Ascending aorta (tissue), 2 donors: ENCODE measurements at regions of chr9 and their contacts with region 1.

Region 1: GRCh38 chr9:112750111-112750767 is at the start of gene SNX30:
- DNase-seq: peak; percentile 70 to 95
- H3K4me3 ChIP-seq: peak within 1 kb of the TSS; percentile 84 to 98
- H3K27ac ChIP-seq: peak within 1 kb of the TSS; percentile 92 to 93
- H3K4me1 ChIP-seq: peaks cover 14 to 38% of the 10 kb centered on the region in 2 donors
- H3K27me3 ChIP-seq: no peaks in the 10 kb centered on the region
- CTCF ChIP-seq: no peak
- total RNA-seq, gene SNX30: 4.7 TPM

Region 2: GRCh38 chr9:112333639-112334431 is 416.4 kb before region 1 on chr9:
- intact Hi-C with region 1: loop called (anchors 2 kb)
- DNase-seq: peak; percentile 65 to 97
- H3K4me3 ChIP-seq: peak overlapping the region; percentile 83 to 95
- H3K27ac ChIP-seq: peak overlapping the region; percentile 98 to 100
- H3K4me1 ChIP-seq: peaks cover 0 to 7% of the 10 kb centered on the region in 2 donors
- H3K27me3 ChIP-seq: no peaks in the 10 kb centered on the region
- CTCF ChIP-seq: peak; percentile 31 to 77 (median 63)

Region 3: GRCh38 chr9:112379177-112380101 is 370.8 kb before region 1 on chr9:
- intact Hi-C with region 1: loop called (anchors 2 kb)
- DNase-seq: peak; percentile 97 to 100
- H3K4me3 ChIP-seq: peak overlapping the region; percentile 89 to 94
- H3K27ac ChIP-seq: peak overlapping the region; percentile 92 to 98
- H3K4me1 ChIP-seq: peaks cover 0 to 30% of the 10 kb centered on the region in 2 donors
- H3K27me3 ChIP-seq: no peaks in the 10 kb centered on the region
- CTCF ChIP-seq: no peak

Region 4: GRCh38 chr9:112486221-112487007 is 263.8 kb before region 1 on chr9 and contains the start of gene KIAA1958:
- intact Hi-C with region 1: loop called (anchors 5 kb)
- DNase-seq: peak; percentile 33 to 89
- H3K4me3 ChIP-seq: peak within 1 kb of the TSS; percentile 96 to 99
- H3K27ac ChIP-seq: peak within 1 kb of the TSS; percentile 80 to 89
- H3K4me1 ChIP-seq: peaks cover 3 to 10% of the 10 kb centered on the region in 2 donors
- H3K27me3 ChIP-seq: no peaks in the 10 kb centered on the region
- CTCF ChIP-seq: no peak
- total RNA-seq, gene KIAA1958: 2.0 TPM

Region 5: DNA sequence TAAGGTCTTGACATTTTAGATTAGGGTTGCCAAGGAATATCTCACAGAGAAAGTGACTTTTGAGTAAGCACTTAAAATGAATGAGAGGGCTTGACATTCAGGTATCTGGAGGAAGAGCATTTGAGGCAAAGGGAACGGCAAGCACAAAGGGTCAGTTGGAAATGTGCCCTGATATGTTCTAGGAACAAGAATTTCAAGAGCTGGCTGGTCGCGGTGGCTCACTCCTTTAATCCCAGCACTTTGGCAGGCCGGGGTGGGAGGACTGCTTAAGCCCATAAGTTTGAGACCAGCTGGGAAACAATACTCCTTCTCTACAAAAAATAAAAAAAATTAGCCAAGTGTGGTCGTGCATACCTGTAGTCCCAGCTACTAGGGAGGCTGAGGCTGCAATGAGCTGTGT is 247.1 kb before region 1 on chr9:
- intact Hi-C with region 1: no loop called
- DNase-seq: no peak
- H3K4me3 ChIP-seq: no peak overlapping the region
- H3K27ac ChIP-seq: no peak overlapping the region
- H3K4me1 ChIP-seq: no peaks in the 10 kb centered on the region
- H3K27me3 ChIP-seq: no peaks in the 10 kb centered on the region
- CTCF ChIP-seq: no peak

Region 6: DNA sequence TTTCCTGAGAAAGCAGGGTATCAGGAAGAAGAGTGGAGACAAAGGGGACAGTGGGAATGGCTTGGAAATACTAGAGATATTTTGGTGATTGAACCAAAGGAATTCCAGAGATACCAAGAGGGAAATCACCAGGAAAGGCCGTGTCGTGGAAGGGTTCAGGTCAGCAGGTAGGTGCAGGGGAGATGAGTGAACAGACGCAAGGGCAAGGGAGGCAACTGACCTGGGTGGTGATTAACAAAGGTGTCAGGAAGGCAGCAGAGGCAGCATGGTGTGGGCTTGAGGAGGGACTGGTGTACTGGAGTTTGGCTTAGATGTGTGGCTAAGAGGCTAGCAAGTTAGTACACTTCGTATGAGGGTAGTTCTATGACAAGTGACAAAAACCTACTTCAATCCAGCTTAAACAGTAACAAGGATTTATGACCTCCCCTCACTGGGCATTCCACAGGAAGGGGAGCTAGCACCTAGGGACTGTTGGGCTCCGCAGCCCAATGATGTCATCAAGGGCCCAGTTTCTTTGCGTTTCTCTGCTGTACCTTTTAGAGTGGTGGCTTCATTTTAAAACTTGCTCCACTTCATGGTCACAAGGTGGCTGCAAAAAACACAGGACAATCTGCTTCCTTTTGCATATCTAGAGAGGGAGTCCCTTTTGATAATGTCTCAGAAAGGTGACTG is 69.4 kb before region 1 on chr9:
- intact Hi-C with region 1: no loop called
- DNase-seq: no peak
- H3K4me3 ChIP-seq: no peak overlapping the region
- H3K27ac ChIP-seq: no peak overlapping the region
- H3K4me1 ChIP-seq: no peaks in the 10 kb centered on the region
- H3K27me3 ChIP-seq: no peaks in the 10 kb centered on the region
- CTCF ChIP-seq: no peak

Region 7: DNA sequence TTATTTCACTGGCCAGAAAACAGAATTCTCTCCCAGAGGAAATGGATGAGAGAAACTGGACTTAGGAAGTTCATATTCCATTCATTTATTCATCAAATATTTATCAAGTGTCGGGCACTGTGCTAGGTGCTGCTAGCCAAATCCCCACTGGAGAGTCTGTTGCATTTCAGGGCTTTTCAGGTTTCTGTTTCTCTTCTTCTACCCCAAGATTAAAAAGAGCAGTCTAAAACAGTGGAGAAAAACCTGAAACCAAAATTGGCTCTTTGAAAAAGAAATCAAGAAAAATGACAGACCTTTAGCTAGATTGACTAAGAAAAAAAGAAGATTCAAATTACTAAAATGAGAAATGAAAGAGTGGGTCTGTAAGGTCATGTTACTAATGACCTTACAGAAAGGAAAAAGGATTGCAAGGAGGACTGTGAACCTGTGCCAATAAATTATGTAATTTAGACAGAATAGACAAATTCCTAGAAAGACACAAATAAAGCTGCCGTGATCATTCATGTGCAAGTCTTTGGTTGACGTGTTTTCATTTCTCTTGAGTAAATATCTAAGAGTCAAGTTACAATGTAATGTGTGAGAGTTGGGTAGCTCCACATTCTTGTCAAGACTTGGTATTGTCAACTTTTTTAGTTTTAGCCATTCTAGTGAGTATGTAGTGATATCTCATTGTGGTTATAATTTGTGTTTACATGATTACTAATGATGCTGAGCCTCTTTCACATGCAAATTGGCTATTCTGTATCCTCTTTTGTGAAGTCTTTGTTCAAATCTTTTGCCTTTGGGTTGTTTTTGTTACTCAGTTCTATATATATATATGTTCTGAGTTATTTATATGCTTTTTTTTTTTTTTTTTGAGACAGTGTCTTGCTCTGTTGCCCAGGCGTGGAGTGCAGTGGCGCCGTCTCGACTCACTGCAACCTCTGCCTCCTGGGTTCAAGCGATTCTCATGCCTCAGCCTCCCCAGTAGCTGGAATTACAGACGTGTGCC is 24.1 kb after region 1 on chr9:
- intact Hi-C with region 1: no loop called
- DNase-seq: no peak
- H3K4me3 ChIP-seq: no peak overlapping the region
- H3K27ac ChIP-seq: no peak overlapping the region
- H3K4me1 ChIP-seq: no peaks in the 10 kb centered on the region
- H3K27me3 ChIP-seq: no peaks in the 10 kb centered on the region
- CTCF ChIP-seq: no peak

Region 8: GRCh38 chr9:112793213-112793810 is 43.1 kb after region 1 on chr9:
- intact Hi-C with region 1: loop called (anchors 5 kb)
- DNase-seq: peak in 1 of 2 donors; percentile 72
- H3K4me3 ChIP-seq: no peak overlapping the region
- H3K27ac ChIP-seq: no peak overlapping the region
- H3K4me1 ChIP-seq: peaks cover 9 to 17% of the 10 kb centered on the region in 2 donors
- H3K27me3 ChIP-seq: no peaks in the 10 kb centered on the region
- CTCF ChIP-seq: peak; percentile 40 to 55 (median 44)

Region 9: GRCh38 chr9:112819635-112820496 is 69.6 kb after region 1 on chr9:
- intact Hi-C with region 1: loop called (anchors 2 kb)
- DNase-seq: peak in 1 of 2 donors; percentile 82
- H3K4me3 ChIP-seq: no peak overlapping the region
- H3K27ac ChIP-seq: peak overlapping the region in 1 of 2 donors; percentile 19
- H3K4me1 ChIP-seq: peaks cover 0 to 8% of the 10 kb centered on the region in 2 donors
- H3K27me3 ChIP-seq: no peaks in the 10 kb centered on the region
- CTCF ChIP-seq: peak; percentile 50 to 72 (median 53)

Region 10: GRCh38 chr9:112867416-112867991 is 117.3 kb after region 1 on chr9:
- intact Hi-C with region 1: no loop called
- DNase-seq: no peak
- H3K4me3 ChIP-seq: no peak overlapping the region
- H3K27ac ChIP-seq: no peak overlapping the region
- H3K4me1 ChIP-seq: no peaks in the 10 kb centered on the region
- H3K27me3 ChIP-seq: no peaks in the 10 kb centered on the region
- CTCF ChIP-seq: no peak

Region 11: DNA sequence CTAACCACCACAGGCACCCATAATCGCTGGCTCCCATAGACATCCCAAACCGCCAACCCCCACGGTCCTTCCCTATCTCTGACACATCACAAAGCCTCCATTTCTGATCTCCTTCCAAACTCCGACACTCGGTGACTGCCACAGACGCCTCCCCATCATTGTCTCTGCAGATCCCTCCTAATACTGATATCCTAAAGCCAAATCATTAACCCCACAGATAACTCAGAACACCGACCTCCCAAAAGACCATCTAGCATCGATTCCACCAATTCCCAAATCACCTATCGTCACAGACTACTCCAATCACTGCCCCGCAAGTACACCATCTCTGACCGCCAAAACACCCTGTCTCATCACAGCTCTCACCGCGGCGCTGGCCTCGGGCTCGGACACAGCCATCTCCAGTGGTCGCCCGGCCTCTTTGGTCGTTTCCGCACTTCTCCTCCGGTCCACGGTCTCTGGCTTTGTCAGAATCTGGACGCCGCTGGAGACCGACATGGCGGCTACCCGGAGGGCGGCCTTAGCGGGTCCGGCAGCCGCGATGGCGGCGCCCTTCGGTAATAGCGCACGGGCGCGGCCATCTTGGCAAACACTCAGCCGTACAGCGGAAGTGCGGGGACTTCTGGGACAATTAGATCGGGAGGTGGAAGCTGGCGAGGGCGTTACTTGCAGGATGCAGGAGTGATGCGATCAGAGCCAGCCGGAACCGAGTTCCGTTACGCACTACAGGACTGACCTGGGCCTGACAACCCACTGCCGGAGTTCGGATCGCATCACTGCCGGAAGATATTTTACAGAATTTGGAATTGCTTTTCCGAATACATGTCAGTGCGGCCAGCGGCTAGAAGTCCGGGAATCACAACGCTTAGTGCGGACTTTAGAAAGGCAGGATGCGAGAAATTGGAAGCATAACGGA is 306.2 kb after region 1 on chr9 and contains the start of gene ZFP37:
- intact Hi-C with region 1: loop called (anchors 10 kb)
- DNase-seq: peak; percentile 77 to 97
- H3K4me3 ChIP-seq: peak within 1 kb of the TSS; percentile 69 to 77
- H3K27ac ChIP-seq: peak within 1 kb of the TSS; percentile 62 to 84
- H3K4me1 ChIP-seq: no peaks in the 10 kb centered on the region
- H3K27me3 ChIP-seq: peaks cover 2% of the 10 kb centered on the region
- CTCF ChIP-seq: no peak
- total RNA-seq, gene ZFP37: 3.3 TPM